Activated CD4-positive, alpha-beta T cell treated with anti-CD3 and anti-CD28 coated beads for 36 hours (primary cell): ENCODE measurements at regions of chr11 and their contacts with region 1.

Region 1: GRCh38 chr11:18526521-18527296 is at the start of gene TSG101:
- DNase-seq: peak; percentile 95
- ATAC-seq: peak; percentile 90
- H3K4me3 Mint-ChIP-seq: peak within 1 kb of the TSS; percentile 99
- H3K27ac Mint-ChIP-seq: peak within 1 kb of the TSS; percentile 100
- H3K4me1 Mint-ChIP-seq: peaks cover 49% of the 10 kb centered on the region
- H3K27me3 Mint-ChIP-seq: no peaks in the 10 kb centered on the region
- total RNA-seq, gene TSG101: 39.2 to 85.0 TPM

Region 2: DNA sequence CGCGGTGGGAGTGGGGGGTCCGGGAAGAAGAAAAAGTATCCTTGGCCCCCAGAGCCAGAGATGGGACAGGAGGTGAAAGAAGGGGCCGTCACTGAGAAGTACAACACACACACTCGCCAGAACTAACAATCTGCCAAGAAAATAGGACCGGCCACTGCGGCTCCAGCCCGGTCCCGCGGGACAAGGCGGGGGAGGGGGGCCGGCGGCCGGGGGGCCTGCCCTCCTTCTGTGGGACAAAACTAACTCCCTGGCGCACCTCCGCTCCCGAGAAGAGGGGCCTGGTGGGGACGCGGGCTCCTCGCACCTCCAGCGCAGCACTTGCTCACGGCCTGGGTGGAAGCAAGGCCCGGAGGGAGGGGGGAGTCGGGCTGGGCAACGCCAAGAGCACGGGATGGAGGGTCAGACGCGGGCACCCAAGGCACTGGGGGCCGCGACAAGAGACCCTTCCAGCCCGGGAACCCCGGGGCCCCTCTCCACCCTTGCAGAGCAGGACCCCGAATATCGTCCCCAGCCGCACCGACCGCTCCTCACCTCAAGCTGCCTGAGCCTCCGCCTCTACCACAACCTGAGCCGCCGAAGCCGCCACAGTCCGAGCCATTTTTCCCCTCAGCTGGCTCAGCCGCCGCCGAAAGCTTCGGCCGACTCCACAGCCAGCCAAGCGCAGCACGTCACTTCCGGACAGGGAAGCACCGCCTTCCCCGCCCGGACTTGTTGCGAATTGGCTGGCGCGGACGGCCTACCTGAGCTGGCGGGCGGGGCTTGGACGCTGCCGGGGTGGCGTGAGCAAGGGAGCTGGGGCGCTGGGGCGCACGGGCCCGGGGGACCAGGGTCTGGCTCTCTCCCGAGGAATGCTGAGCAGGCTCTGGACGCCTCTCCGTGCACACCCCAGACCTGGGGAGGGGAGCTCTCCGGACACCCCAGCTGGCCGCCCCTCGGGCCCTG is 1319.1 kb before region 1 on chr11 and contains the start of gene PIK3C2A:
- CTCF ChIA-PET with region 1: no interaction called
- POLR2A ChIA-PET with region 1: no interaction called
- intact Hi-C with region 1: loop called in 1 of 2 experiments (anchors 2 kb)
- DNase-seq: peak; percentile 97
- ATAC-seq: peak; percentile 97
- H3K4me3 Mint-ChIP-seq: peak within 1 kb of the TSS; percentile 91
- H3K27ac Mint-ChIP-seq: peak within 1 kb of the TSS; percentile 97
- H3K4me1 Mint-ChIP-seq: peaks cover 40% of the 10 kb centered on the region
- H3K27me3 Mint-ChIP-seq: no peaks in the 10 kb centered on the region
- total RNA-seq, gene PIK3C2A: 23.3 to 27.3 TPM

Region 3: DNA sequence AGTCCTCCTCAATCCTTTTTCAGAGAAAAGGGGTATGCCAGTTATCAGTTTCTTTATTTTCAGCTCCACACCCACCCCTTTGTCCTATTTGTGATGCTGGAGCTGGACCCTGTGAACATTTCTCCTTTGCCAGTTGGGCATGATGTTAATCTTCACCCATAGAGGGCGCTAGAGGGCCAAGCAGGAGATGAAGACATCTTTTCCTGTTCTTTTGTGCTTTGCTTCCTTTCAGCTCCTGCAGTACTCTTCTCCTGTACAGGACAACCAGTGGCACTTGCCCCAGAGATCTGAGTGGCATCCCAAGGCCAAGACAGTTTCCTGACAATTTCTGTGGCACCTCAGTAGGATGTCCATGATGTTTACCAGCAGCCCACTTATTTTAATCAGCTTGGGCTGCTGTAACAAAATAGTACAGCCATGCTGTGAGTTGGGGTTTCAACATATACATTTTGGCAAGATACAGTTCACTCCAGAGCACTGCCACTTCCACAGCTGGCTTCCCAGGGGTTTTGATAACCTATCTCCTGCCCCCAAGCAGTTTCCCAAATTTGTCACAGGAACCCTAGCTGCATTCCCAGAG is 282.8 kb before region 1 on chr11:
- CTCF ChIA-PET with region 1: interaction called, 12 read pairs
- POLR2A ChIA-PET with region 1: no interaction called
- intact Hi-C with region 1: loop called (anchors 2 to 10 kb)
- DNase-seq: peak; percentile 77
- ATAC-seq: no peak
- H3K4me3 Mint-ChIP-seq: no peak overlapping the region
- H3K27ac Mint-ChIP-seq: no peak overlapping the region
- H3K4me1 Mint-ChIP-seq: peaks cover 11% of the 10 kb centered on the region
- H3K27me3 Mint-ChIP-seq: peaks cover 7% of the 10 kb centered on the region

Region 4: DNA sequence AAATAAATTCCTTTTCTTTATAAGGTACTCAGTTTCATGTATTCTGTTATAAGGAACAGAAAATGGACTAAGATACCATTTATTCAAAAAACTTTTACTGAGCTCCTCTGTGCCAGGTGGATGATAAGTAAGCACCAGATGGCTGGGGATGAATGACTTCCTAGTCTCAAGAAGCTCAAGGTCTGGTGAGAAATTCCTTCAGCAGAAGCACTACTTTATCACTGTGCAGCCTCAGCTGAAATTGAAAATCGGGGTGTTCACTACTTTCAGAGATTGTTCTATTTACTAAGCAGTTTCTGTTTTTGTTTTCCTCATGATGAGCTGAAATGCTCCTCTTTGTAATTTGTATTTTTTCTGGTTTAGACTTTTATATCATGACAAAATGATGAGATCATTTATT is 63.3 kb before region 1 on chr11:
- CTCF ChIA-PET with region 1: interaction called, 4 read pairs
- POLR2A ChIA-PET with region 1: no interaction called
- intact Hi-C with region 1: loop called in 1 of 2 experiments (anchors 10 kb)
- DNase-seq: no peak
- ATAC-seq: no peak
- H3K4me3 Mint-ChIP-seq: no peak overlapping the region
- H3K27ac Mint-ChIP-seq: no peak overlapping the region
- H3K4me1 Mint-ChIP-seq: peaks cover 10% of the 10 kb centered on the region
- H3K27me3 Mint-ChIP-seq: no peaks in the 10 kb centered on the region

Region 5: DNA sequence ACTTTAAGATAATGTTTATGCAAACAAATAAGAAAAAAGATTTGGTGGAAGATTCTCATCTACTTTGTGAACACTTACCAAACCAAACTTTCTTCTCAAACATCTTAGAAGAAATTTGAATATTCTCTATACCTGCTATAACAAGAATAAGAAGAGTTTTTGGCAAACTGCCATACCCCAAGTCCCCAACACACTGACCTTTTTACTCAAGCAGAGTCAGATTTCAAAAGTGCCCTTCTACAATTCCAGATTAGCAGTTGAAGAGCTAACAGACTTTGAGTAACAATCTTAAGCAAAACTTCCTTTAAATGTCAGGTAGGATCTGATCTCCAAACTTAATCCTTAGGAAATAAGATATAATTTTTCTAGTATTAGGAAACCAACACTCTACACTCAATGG is 33.8 kb before region 1 on chr11:
- CTCF ChIA-PET with region 1: no interaction called
- POLR2A ChIA-PET with region 1: no interaction called
- intact Hi-C with region 1: no loop called
- DNase-seq: no peak
- ATAC-seq: no peak
- H3K4me3 Mint-ChIP-seq: no peak overlapping the region
- H3K27ac Mint-ChIP-seq: no peak overlapping the region
- H3K4me1 Mint-ChIP-seq: peaks cover 6% of the 10 kb centered on the region
- H3K27me3 Mint-ChIP-seq: no peaks in the 10 kb centered on the region

Region 6: GRCh38 chr11:18634140-18635032 is 107.7 kb after region 1 on chr11 and contains the start of gene SPTY2D1:
- CTCF ChIA-PET with region 1: interaction called, 5 read pairs
- POLR2A ChIA-PET with region 1: interaction called, 13 read pairs
- intact Hi-C with region 1: loop called (anchors 1 kb)
- DNase-seq: peak; percentile 99
- ATAC-seq: peak; percentile 98
- H3K4me3 Mint-ChIP-seq: peak within 1 kb of the TSS; percentile 83
- H3K27ac Mint-ChIP-seq: peak within 1 kb of the TSS; percentile 95
- H3K4me1 Mint-ChIP-seq: peaks cover 21% of the 10 kb centered on the region
- H3K27me3 Mint-ChIP-seq: no peaks in the 10 kb centered on the region
- total RNA-seq, gene SPTY2D1: 17.8 to 26.4 TPM

Region 7: DNA sequence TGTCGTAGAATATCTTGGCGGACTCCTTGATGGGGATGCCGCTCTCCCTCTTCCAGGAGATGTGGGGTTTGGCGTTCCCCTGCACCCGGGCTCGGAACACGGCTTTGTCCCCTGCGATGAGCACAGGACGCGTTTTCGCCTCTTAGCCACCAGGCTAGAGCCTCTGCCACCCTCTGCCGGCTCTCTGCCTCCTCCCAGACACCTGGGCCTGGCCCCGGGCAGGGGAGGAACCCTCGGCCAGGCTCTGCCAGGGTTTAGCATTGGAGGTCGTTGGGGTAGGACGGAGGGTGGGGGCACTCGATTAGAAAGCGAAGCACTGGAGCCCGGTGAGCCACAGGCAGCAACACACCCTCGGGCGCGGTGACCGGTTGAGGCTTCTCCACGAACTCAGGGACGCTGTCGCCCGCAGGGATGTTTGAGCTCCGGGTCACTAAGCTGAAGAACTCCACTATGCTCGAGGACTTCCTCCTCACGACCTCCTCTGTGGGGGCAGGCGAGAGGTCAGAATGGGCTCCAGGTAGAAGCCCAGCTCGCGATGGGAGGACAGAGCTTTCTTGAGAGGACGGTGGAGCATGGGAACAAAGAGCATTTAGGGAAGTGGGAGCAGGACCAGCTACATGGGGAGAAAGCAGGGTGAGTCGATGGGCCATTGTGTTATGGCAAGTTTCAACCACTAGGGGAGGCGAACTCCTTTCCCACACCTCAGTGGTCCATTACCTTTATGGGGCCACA is 195.0 kb after region 1 on chr11:
- CTCF ChIA-PET with region 1: interaction called, 8 read pairs
- POLR2A ChIA-PET with region 1: no interaction called
- intact Hi-C with region 1: loop called (anchors 5 kb)
- DNase-seq: peak; percentile 72
- ATAC-seq: peak; percentile 68
- H3K4me3 Mint-ChIP-seq: peak overlapping the region; percentile 78
- H3K27ac Mint-ChIP-seq: no peak overlapping the region
- H3K4me1 Mint-ChIP-seq: peaks cover 5% of the 10 kb centered on the region
- H3K27me3 Mint-ChIP-seq: no peaks in the 10 kb centered on the region

Region 8: GRCh38 chr11:19240420-19241259 is 713.9 kb after region 1 on chr11 and contains the start of gene E2F8:
- CTCF ChIA-PET with region 1: no interaction called
- POLR2A ChIA-PET with region 1: no interaction called
- intact Hi-C with region 1: loop called in 1 of 2 experiments (anchors 5 kb)
- DNase-seq: peak; percentile 94
- ATAC-seq: peak; percentile 82
- H3K4me3 Mint-ChIP-seq: peak within 1 kb of the TSS; percentile 89
- H3K27ac Mint-ChIP-seq: peak within 1 kb of the TSS; percentile 60
- H3K4me1 Mint-ChIP-seq: peaks cover 14% of the 10 kb centered on the region
- H3K27me3 Mint-ChIP-seq: peaks cover 31% of the 10 kb centered on the region
- total RNA-seq, gene E2F8: 18.0 to 22.2 TPM